SK-MEL-5 (cell line): ENCODE measurements at regions of chr15 and their contacts with region 1.

Region 1: DNA sequence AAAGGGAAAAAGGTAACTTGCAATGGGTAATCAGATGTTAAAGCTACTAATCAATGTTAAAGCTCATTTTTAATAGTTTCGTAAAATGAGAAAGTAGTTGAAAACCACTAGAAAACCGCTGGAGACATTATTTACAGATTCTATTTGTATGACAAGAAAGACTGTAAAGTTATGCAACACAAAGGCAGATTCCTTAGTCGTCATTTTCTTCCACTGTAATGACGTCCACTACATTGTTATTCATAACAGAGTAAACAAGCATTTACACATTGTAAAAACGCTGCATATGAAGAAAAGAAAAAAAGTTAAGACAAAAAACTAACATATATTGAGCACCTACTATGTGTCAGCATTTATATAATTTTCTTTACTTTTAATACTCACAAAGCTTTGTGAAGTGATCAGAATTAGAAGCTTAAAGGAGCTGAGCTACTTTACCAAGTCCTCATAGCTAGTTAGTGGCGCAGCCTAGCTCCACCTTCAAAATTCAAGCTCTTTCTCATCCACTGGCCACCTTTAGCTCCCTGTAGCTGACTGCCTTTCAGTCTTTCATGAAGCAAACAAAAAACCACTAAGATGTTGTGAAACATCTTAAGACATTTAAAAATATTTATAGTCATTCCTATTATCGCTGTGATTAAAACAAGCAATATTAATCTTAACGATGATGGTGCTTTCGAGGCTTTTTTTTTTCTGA is 100.1 kb upstream of the CDIN1 start:
- DNase-seq: peak; percentile 13

Region 2: DNA sequence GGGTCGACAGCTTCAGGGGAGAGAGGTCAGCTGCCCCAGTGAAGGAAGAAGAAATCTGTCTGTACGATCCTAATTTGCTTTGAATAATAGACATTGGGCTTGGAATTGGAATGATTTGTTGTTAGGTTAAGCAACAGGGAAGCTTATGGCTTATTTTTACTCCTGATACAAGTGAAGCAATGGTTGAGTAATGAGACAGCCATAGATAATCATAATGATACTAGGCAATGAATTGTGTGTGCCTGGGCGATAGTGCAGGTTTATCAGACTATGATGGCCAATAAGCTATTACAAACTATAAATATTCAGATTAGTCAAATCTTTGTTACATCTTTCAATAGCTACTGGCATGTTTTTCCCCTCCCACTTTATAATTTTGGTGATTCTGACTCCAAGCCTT is 40.8 kb before region 1 on chr15:
- in situ Hi-C with region 1: loop called (anchors 5 kb)
- DNase-seq: no peak